ENCODE measurements at regions of chr6 and their contacts with region 1.

Region 1: DNA sequence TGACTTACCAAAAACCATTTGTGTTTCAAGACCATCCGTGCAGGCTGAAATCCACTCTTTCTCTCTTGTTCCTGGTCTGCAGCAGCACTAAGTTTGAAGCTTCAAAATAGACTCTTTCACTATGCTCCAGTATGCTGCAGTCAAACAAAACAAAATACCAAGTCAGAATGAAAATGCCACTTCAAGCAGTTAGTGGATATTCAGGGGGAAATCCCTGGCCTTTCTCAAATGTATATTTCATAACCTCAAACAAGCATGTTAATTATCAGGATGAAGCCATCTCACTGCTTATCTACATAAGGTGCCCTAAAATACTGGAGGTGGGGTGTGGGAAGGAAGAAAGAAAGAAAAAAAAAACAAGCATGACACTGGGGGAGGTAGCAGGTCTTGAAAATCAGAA is 103.5 kb downstream of the ATXN1 start:
- DNase-seq: peak; percentile 75
- H3K4me3 Mint-ChIP-seq: peak overlapping the region; percentile 50
- H3K27ac Mint-ChIP-seq: peak overlapping the region; percentile 83
- H3K4me1 Mint-ChIP-seq: peaks cover 67% of the 10 kb centered on the region
- H3K27me3 Mint-ChIP-seq: no peaks in the 10 kb centered on the region

Region 2: DNA sequence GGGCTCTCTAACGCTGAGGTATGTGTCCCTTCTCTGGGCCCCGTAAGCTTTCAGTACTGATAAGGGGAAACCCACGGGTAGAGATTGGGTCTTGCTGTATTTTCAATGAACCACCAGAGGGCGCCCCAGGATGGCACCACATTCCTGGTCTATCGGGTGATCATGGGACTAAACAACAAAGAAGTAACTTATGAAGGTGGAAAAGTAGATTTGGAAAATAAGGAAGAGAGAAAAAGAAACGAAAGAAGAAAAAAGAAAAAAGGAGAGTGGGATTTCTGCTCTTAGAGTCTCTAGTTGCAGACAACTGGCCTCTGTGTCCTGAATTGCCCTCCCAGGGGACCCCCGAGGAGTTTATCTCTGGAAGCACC is 325.6 kb before region 1 on chr6:
- intact Hi-C with region 1: loop called (anchors 1 kb)
- DNase-seq: peak; percentile 94
- H3K4me3 Mint-ChIP-seq: no peak overlapping the region
- H3K27ac Mint-ChIP-seq: no peak overlapping the region
- H3K4me1 Mint-ChIP-seq: peaks cover 3% of the 10 kb centered on the region
- H3K27me3 Mint-ChIP-seq: no peaks in the 10 kb centered on the region

Region 3: GRCh38 chr6:16514249-16514648 is 143.5 kb before region 1 on chr6:
- intact Hi-C with region 1: loop called (anchors 2 kb)
- DNase-seq: peak; percentile 82
- H3K4me3 Mint-ChIP-seq: peak overlapping the region; percentile 52
- H3K27ac Mint-ChIP-seq: peak overlapping the region; percentile 84
- H3K4me1 Mint-ChIP-seq: peaks cover 70% of the 10 kb centered on the region
- H3K27me3 Mint-ChIP-seq: no peaks in the 10 kb centered on the region

Region 4: GRCh38 chr6:16602035-16602434 is 55.7 kb before region 1 on chr6:
- intact Hi-C with region 1: loop called (anchors 2 kb)
- DNase-seq: peak; percentile 68
- H3K4me3 Mint-ChIP-seq: peak overlapping the region; percentile 9
- H3K27ac Mint-ChIP-seq: peak overlapping the region; percentile 27
- H3K4me1 Mint-ChIP-seq: peaks cover 27% of the 10 kb centered on the region
- H3K27me3 Mint-ChIP-seq: no peaks in the 10 kb centered on the region

Region 5: DNA sequence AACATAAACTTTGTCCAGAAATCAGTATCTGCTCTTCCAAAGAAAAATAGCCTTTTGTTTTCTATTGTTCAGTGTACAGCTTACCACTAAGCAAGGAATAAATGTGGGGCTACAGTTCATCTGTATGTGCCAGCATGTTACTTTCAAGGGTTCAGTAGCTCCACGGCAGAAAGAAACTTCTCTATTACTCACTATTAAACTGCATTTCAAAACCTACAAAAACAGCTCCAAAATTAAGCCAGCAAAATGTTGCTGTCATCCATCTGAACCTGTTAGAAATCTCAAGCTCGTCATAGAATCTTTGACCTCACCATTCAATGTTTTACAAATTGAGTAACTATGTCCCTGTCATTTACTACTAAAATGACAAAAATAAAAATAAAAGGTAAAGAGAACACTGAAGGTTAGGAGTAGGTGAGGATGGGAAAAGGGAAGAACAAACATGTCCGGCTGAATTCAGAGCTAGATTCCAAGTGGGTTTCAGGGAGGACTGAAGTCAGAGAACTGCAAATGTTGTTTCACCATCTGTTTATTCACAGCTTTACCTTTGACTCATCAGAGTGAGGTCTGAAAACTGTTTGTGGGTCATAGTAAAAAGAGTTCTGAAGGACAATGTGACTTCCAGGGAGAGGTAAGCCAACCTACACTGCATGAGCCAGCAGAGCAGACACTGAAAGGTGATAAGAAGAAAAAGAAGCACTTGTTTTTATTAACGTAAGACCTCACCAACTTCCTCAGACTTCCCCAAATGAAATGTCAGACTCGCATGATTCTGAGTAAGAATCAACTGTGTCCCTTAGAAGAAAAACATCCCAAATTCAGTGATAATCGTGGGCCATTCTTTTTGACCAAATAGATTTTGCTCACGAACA is 41.5 kb after region 1 on chr6:
- intact Hi-C with region 1: loop called (anchors 1 kb)
- DNase-seq: peak; percentile 71
- H3K4me3 Mint-ChIP-seq: peak overlapping the region; percentile 71
- H3K27ac Mint-ChIP-seq: peak overlapping the region; percentile 95
- H3K4me1 Mint-ChIP-seq: peaks cover 68% of the 10 kb centered on the region
- H3K27me3 Mint-ChIP-seq: no peaks in the 10 kb centered on the region

Measured in activated CD4-positive, alpha-beta T cell treated with anti-CD3 and anti-CD28 coated beads, Interleukin-2, amount 10 ng/mL, durations not matched to agents 24 days and 14 days (primary cell).